CD14-positive monocyte (primary cell): ENCODE measurements at regions of chr3 and their contacts with region 1.

Region 1: GRCh38 chr3:156151824-156152428 is 31.5 kb downstream of the KCNAB1 start:
- DNase-seq: peak; percentile 22 to 49 (median 43)
- H3K4me3 ChIP-seq: no peak overlapping the region
- H3K4me3 Mint-ChIP-seq: no peak overlapping the region
- H3K27ac ChIP-seq: no peak overlapping the region
- H3K27ac Mint-ChIP-seq: no peak overlapping the region
- H3K4me1 ChIP-seq: peaks cover 8 to 10% of the 10 kb centered on the region in 2 donors
- H3K4me1 Mint-ChIP-seq: peaks cover 9% of the 10 kb centered on the region
- H3K27me3 ChIP-seq: no peaks in the 10 kb centered on the region
- H3K27me3 Mint-ChIP-seq: peaks cover 2 to 6% (median 6%) of the 10 kb centered on the region in 3 donors
- CTCF ChIP-seq: peak; percentile 86

Region 2: GRCh38 chr3:156098437-156099035 is 53.4 kb before region 1 on chr3:
- intact Hi-C with region 1: no loop called
- DNase-seq: no peak
- H3K4me3 ChIP-seq: no peak overlapping the region
- H3K4me3 Mint-ChIP-seq: no peak overlapping the region
- H3K27ac ChIP-seq: no peak overlapping the region
- H3K27ac Mint-ChIP-seq: no peak overlapping the region
- H3K4me1 ChIP-seq: no peaks in the 10 kb centered on the region
- H3K4me1 Mint-ChIP-seq: no peaks in the 10 kb centered on the region
- H3K27me3 ChIP-seq: no peaks in the 10 kb centered on the region
- H3K27me3 Mint-ChIP-seq: peaks cover 0 to 6% (median 3%) of the 10 kb centered on the region in 3 donors
- CTCF ChIP-seq: no peak

Region 3: GRCh38 chr3:156382458-156383346 is 230.8 kb after region 1 on chr3:
- intact Hi-C with region 1: loop called (anchors 2 kb)
- DNase-seq: peak; percentile 25 to 37 (median 36)
- H3K4me3 ChIP-seq: no peak overlapping the region
- H3K4me3 Mint-ChIP-seq: no peak overlapping the region
- H3K27ac ChIP-seq: no peak overlapping the region
- H3K27ac Mint-ChIP-seq: no peak overlapping the region
- H3K4me1 ChIP-seq: no peaks in the 10 kb centered on the region
- H3K4me1 Mint-ChIP-seq: no peaks in the 10 kb centered on the region
- H3K27me3 ChIP-seq: no peaks in the 10 kb centered on the region
- H3K27me3 Mint-ChIP-seq: peaks cover 0 to 5% (median 3%) of the 10 kb centered on the region in 3 donors
- CTCF ChIP-seq: peak; percentile 84

Region 4: DNA sequence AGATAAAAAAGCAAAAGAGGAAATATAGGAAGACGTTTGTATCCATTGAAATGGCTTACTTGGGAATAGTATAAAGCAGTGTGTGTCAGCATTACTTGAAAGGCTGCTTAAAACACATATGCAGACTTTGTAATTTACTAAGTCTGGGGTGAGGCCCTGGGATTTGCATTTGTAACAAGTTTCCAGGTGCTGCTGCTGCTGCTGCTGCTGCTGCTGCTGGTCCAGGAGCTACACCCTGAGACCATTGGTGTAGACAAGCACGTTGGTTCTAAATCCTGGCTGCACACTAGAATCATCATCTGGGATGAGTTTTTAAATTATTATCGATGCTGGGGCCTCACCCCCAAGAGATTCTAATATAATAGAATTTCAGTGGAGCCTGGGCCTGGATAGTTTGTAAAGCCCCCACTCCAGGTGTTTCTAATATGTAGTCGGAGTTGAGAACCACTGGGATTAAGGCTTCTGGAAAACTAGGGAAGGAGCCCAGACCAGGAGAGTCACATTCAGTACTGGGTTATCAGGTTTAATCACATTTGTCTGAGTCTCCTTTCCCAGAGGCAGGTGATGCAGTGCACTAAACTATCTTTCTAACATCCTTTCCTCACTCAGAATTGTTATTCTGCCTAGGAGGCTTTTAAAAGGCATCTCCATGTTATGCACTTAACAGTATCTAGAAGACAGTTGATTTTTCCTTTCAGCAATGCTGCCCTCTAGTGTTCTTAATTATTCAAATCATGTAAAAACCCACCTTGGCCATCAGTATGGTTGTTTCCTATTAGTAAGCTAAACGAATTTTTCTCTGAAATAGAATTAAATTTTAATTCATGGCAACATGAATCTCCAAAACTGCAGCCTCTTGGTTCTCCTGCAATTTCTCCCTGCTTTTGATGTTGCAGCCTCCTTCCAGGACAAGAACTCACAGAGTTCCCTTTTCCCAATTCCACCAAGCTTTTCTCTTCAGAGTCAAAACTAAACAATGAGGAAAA is 357.6 kb after region 1 on chr3:
- intact Hi-C with region 1: loop called in 1 of 2 experiments (anchors 5 kb)
- DNase-seq: peak; percentile 7 to 53 (median 36)
- H3K4me3 ChIP-seq: no peak overlapping the region
- H3K4me3 Mint-ChIP-seq: no peak overlapping the region
- H3K27ac ChIP-seq: no peak overlapping the region
- H3K27ac Mint-ChIP-seq: no peak overlapping the region
- H3K4me1 ChIP-seq: no peaks in the 10 kb centered on the region
- H3K4me1 Mint-ChIP-seq: no peaks in the 10 kb centered on the region
- H3K27me3 ChIP-seq: no peaks in the 10 kb centered on the region
- H3K27me3 Mint-ChIP-seq: peaks cover 3 to 8% (median 8%) of the 10 kb centered on the region in 3 donors
- CTCF ChIP-seq: peak; percentile 67

Region 5: GRCh38 chr3:156535162-156535627 is 383.3 kb after region 1 on chr3:
- intact Hi-C with region 1: loop called in 1 of 2 experiments (anchors 10 kb)
- DNase-seq: peak in 2 of 3 donors; percentile 21 to 48
- H3K4me3 ChIP-seq: no peak overlapping the region
- H3K4me3 Mint-ChIP-seq: no peak overlapping the region
- H3K27ac ChIP-seq: no peak overlapping the region
- H3K27ac Mint-ChIP-seq: peak overlapping the region in 1 of 7 donors; percentile 68
- H3K4me1 ChIP-seq: no peaks in the 10 kb centered on the region
- H3K4me1 Mint-ChIP-seq: peaks cover 5% of the 10 kb centered on the region
- H3K27me3 ChIP-seq: no peaks in the 10 kb centered on the region
- H3K27me3 Mint-ChIP-seq: peaks cover 0 to 3% (median 0%) of the 10 kb centered on the region in 3 donors
- CTCF ChIP-seq: no peak

Region 6: DNA sequence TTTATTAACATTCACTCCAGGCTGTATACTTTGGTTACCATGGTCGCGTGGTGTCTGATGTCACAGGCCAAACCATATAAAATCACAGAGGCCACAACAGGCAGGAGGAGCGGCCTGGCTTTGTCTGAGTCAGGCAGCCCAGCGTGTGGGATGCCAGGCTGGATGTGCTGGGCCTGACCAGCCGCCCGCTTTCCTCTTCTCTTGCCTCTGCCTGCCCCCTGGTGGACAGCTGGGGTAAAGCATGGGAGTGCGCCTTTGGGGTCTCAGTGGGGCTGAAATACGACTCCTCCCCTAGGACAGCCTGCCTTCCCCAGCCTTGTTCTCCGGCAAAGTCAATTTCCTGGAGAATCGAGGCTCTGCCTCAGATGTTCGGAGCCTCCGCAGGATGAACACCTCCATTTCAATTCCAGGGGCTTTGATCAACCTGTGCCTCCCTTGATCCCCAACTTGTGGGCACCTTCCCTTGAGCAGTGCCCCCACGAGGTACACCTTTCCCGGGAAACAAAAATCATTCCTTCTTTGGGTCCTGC is 929.8 kb after region 1 on chr3:
- intact Hi-C with region 1: loop called in 1 of 2 experiments (anchors 5 kb)
- DNase-seq: peak; percentile 75 to 94 (median 87)
- H3K4me3 ChIP-seq: no peak overlapping the region
- H3K4me3 Mint-ChIP-seq: no peak overlapping the region
- H3K27ac ChIP-seq: no peak overlapping the region
- H3K27ac Mint-ChIP-seq: peak overlapping the region in 2 of 7 donors; percentile 4 to 15
- H3K4me1 ChIP-seq: no peaks in the 10 kb centered on the region
- H3K4me1 Mint-ChIP-seq: peaks cover 5% of the 10 kb centered on the region
- H3K27me3 ChIP-seq: no peaks in the 10 kb centered on the region
- H3K27me3 Mint-ChIP-seq: peaks cover 3 to 4% (median 4%) of the 10 kb centered on the region in 3 donors
- CTCF ChIP-seq: peak; percentile 99

Region 7: GRCh38 chr3:157130467-157131251 is 978.7 kb after region 1 on chr3:
- intact Hi-C with region 1: loop called in 1 of 2 experiments (anchors 5 kb)
- DNase-seq: peak; percentile 67 to 93 (median 76)
- H3K4me3 ChIP-seq: no peak overlapping the region
- H3K4me3 Mint-ChIP-seq: peak overlapping the region in 1 of 2 donors; percentile 21
- H3K27ac ChIP-seq: no peak overlapping the region
- H3K27ac Mint-ChIP-seq: peak overlapping the region in 5 of 7 donors; percentile 13 to 54 (median 31)
- H3K4me1 ChIP-seq: peaks cover 7 to 10% of the 10 kb centered on the region in 2 donors
- H3K4me1 Mint-ChIP-seq: peaks cover 30% of the 10 kb centered on the region
- H3K27me3 ChIP-seq: no peaks in the 10 kb centered on the region
- H3K27me3 Mint-ChIP-seq: peaks cover 0 to 1% (median 1%) of the 10 kb centered on the region in 3 donors
- CTCF ChIP-seq: peak; percentile 78